ENCODE measurements at regions of chr2 and their contacts with region 1.

Region 1: DNA sequence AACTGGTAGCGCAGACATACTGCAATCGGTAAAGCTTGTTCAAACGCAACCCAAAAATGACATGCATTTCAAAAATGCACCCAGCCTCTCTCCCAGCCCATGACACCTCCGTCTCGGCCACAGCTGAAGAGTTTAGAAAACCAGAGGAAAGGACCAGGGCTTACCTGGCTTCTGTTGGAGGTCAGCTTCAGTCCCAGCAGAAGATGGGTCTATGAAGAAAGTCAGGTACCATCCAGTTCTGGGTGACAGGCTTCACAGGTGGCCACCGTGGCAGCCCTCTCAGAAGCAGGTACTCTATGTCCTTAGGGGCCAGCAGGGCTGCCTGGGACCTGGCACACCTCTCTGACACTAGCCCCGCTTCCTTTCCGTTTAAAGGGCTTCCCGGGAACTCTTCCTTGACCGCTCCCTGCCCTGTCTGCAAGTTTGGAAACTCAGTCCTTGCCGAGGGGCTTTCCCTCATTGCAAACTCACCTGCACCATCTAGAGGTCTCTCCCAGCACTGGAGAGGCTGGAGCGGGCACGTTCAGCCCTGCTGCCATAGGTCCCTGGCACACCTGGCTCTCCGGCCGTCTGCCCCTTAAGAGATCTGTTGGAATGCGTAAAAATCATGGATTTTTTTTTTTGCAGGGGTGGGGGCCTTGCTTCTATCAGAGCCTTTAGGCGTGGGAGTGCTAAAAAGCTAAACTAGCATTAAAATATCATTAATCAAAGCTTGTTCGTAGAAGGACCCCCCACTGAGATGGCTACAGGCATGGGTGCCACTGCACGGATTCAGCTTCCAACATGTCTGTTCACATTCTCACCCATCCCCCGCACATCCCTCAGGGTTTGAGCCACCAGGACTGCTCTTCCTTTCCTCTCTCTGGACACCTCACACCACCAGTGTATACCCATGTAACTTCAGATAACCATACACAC is at the start of gene EDAR:
- DNase-seq: peak; percentile 57
- ATAC-seq: peak; percentile 99
- H3K4me3 ChIP-seq: peak within 1 kb of the TSS; percentile 18 to 26; a peak in 3 of 4 replicates
- H3K27ac ChIP-seq: no peak within 1 kb of the TSS
- H3K4me1 ChIP-seq: peaks cover 0 to 13% of the 10 kb centered on the region in 2 experiments; a peak in 2 of 4 replicates
- H3K27me3 ChIP-seq: peaks cover 8% of the 10 kb centered on the region; the same call in 1 of the 2 replicates
- CTCF ChIP-seq: peak; percentile 71 to 81 (median 76)
- POLR2A ChIP-seq: no peak
- RAD21 ChIP-seq: peak; percentile 91
- total RNA-seq, gene EDAR: 0.15 TPM

Region 2: GRCh38 chr2:108786354-108787199 is 202.5 kb before region 1 on chr2 and contains the start of gene CCDC138:
- CTCF ChIA-PET with region 1: no interaction called
- POLR2A ChIA-PET with region 1: no interaction called
- RAD21 ChIA-PET with region 1: no interaction called
- intact Hi-C with region 1: loop called (anchors 10 kb)
- DNase-seq: peak; percentile 68
- ATAC-seq: peak; percentile 95
- H3K4me3 ChIP-seq: peak within 1 kb of the TSS; percentile 80 to 81
- H3K27ac ChIP-seq: peak within 1 kb of the TSS; percentile 72
- H3K4me1 ChIP-seq: peaks cover 6 to 19% of the 10 kb centered on the region in 2 experiments; a peak in 2 of 4 replicates
- H3K27me3 ChIP-seq: no peaks in the 10 kb centered on the region
- CTCF ChIP-seq: no peak
- POLR2A ChIP-seq: peak; percentile 75
- RAD21 ChIP-seq: no peak
- total RNA-seq, gene CCDC138: 13.4 TPM

Region 3: GRCh38 chr2:108927936-108928659 is 61.0 kb before region 1 on chr2:
- CTCF ChIA-PET with region 1: no interaction called
- POLR2A ChIA-PET with region 1: no interaction called
- RAD21 ChIA-PET with region 1: no interaction called
- intact Hi-C with region 1: loop called (anchors 1 kb)
- DNase-seq: peak; percentile 43
- ATAC-seq: peak; percentile 90
- H3K4me3 ChIP-seq: no peak overlapping the region
- H3K27ac ChIP-seq: no peak overlapping the region
- H3K4me1 ChIP-seq: peaks cover 3 to 8% of the 10 kb centered on the region in 2 experiments; a peak in 3 of 4 replicates
- H3K27me3 ChIP-seq: no peaks in the 10 kb centered on the region
- CTCF ChIP-seq: peak; percentile 77 to 90 (median 87); a peak in 5 of 6 replicates
- POLR2A ChIP-seq: no peak
- RAD21 ChIP-seq: peak; percentile 75

Region 4: GRCh38 chr2:109275120-109276012 is 286.3 kb after region 1 on chr2:
- CTCF ChIA-PET with region 1: no interaction called
- POLR2A ChIA-PET with region 1: no interaction called
- RAD21 ChIA-PET with region 1: no interaction called
- intact Hi-C with region 1: no loop called
- DNase-seq: no peak
- ATAC-seq: no peak
- H3K4me3 ChIP-seq: no peak overlapping the region
- H3K27ac ChIP-seq: no peak overlapping the region
- H3K4me1 ChIP-seq: no peaks in the 10 kb centered on the region
- H3K27me3 ChIP-seq: peaks cover 7% of the 10 kb centered on the region; the same call in 1 of the 2 replicates
- CTCF ChIP-seq: no peak
- POLR2A ChIP-seq: no peak
- RAD21 ChIP-seq: no peak

Measured in HCT116 (cell line).